T-cell (primary cell): ENCODE measurements at regions of chr2 and their contacts with region 1.

Region 1: GRCh38 chr2:62202019-62202722 is 6.3 kb downstream of the B3GNT2 start:
- DNase-seq: no peak
- ATAC-seq: no peak
- H3K4me3 ChIP-seq: no peak overlapping the region
- H3K4me3 Mint-ChIP-seq: peak overlapping the region; percentile 2 to 96 (median 10)
- H3K27ac ChIP-seq: peak overlapping the region; percentile 4
- H3K27ac Mint-ChIP-seq: peak overlapping the region; percentile 26 to 71
- H3K4me1 ChIP-seq: peaks cover 43 to 72% of the 10 kb centered on the region in 2 experiments
- H3K4me1 Mint-ChIP-seq: peaks cover 95 to 98% (median 97%) of the 10 kb centered on the region in 3 donors
- H3K27me3 ChIP-seq: no peaks in the 10 kb centered on the region
- H3K27me3 Mint-ChIP-seq: no peaks in the 10 kb centered on the region

Region 2: DNA sequence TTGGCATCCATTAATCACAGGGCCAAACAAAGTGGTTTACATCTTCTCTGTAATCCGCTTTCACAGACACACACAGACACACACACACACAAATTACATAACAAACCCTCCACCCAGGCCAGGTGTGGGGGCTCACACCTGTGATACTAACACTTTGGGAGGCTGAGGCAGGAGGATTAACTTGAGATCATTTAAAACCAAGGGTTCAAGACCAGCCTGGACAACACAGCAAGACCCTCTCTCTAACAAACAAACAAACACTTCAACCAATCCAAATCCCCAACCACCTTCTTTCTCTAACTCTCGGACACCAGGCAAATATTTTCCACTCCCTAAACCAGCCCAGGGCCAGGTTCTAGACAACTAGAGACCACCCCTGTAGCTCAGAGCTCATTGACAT is 584.6 kb before region 1 on chr2:
- CTCF ChIA-PET with region 1: no interaction called
- POLR2A ChIA-PET with region 1: no interaction called
- DNase-seq: no peak
- ATAC-seq: no peak
- H3K4me3 ChIP-seq: no peak overlapping the region
- H3K4me3 Mint-ChIP-seq: no peak overlapping the region
- H3K27ac ChIP-seq: no peak overlapping the region
- H3K27ac Mint-ChIP-seq: no peak overlapping the region
- H3K4me1 ChIP-seq: no peaks in the 10 kb centered on the region
- H3K4me1 Mint-ChIP-seq: no peaks in the 10 kb centered on the region
- H3K27me3 ChIP-seq: peaks cover 0 to 2% of the 10 kb centered on the region in 2 experiments
- H3K27me3 Mint-ChIP-seq: no peaks in the 10 kb centered on the region

Region 3: GRCh38 chr2:62109554-62109953 is 92.6 kb before region 1 on chr2:
- CTCF ChIA-PET with region 1: no interaction called
- POLR2A ChIA-PET with region 1: interaction called in 1 of 2 experiments, 12 read pairs
- DNase-seq: no peak
- ATAC-seq: no peak
- H3K4me3 ChIP-seq: no peak overlapping the region
- H3K4me3 Mint-ChIP-seq: no peak overlapping the region
- H3K27ac ChIP-seq: no peak overlapping the region
- H3K27ac Mint-ChIP-seq: no peak overlapping the region
- H3K4me1 ChIP-seq: no peaks in the 10 kb centered on the region
- H3K4me1 Mint-ChIP-seq: no peaks in the 10 kb centered on the region
- H3K27me3 ChIP-seq: no peaks in the 10 kb centered on the region
- H3K27me3 Mint-ChIP-seq: no peaks in the 10 kb centered on the region

Region 4: DNA sequence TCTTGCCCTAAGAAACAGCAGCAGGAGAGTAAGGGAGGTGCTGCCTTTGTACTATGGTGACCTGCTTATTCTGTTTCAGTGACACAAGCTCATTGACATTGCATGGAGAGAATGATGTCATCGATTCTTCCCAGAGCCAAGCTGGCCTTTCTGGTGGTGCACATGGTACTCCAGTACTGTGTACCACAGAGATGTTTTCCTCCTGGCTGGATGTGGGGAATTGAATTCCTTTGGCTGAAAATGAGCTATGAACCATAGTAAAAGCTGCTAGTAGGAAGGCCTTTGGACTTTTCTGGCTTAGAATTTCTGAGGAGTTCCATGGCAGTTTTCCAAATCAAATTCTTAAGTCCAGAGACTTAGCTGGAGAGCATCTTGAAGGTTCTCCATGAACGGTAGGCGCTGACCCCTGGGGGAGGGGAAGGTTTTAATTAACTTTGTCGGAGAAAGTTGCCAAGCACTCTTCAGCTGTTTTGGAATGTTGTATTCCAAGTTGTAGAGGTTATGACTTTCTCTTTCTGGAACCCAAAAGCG is 23.4 kb before region 1 on chr2:
- CTCF ChIA-PET with region 1: no interaction called
- POLR2A ChIA-PET with region 1: no interaction called
- DNase-seq: no peak
- ATAC-seq: no peak
- H3K4me3 ChIP-seq: no peak overlapping the region
- H3K4me3 Mint-ChIP-seq: no peak overlapping the region
- H3K27ac ChIP-seq: no peak overlapping the region
- H3K27ac Mint-ChIP-seq: no peak overlapping the region
- H3K4me1 ChIP-seq: peaks cover 2 to 5% of the 10 kb centered on the region in 2 experiments
- H3K4me1 Mint-ChIP-seq: peaks cover 4 to 19% (median 6%) of the 10 kb centered on the region in 3 donors
- H3K27me3 ChIP-seq: no peaks in the 10 kb centered on the region
- H3K27me3 Mint-ChIP-seq: no peaks in the 10 kb centered on the region

Region 5: DNA sequence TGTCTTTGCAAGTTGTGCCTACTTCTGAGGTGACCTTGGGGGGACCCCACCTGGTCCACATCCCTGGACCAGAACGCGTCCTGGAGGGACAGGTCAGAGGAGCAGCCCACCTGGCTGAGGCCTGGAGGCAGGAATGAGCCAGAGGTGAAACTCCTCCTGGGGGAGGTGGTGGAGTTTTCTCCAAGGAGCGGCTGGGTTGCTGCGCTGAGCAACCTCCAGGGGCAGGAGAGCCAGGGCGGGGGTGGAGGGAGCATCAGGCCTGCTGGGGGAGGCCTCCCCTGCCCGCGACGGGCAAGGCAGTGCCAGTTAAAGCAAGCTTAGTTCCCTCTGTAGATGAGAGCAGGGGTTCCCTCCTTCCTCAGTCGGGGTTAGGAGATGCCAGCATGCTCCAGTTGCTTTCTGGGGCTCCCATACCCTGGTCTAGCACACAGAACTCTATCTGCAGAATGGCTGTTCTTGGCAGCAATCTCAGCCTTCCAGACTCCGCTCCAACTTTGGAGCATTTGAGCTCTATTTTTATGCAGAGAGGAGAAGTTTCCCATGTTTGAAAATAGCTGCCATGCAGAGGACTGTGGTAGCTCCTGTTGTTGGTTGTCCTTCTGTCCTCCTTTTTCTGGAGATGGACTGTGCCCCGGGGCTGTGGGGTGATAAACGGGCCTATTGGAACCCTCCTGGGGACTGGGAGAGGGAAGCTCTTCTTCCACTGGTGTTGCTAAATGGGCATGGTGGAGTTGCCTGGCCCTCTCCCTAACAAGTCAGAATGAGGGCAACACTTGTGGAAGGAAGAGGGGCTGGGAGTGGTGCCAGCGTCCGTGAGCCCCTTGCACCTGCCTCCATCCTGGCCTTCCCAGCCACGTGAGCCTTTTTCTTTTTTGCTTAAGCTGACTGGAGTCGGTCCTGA is 32.8 kb after region 1 on chr2:
- CTCF ChIA-PET with region 1: no interaction called
- POLR2A ChIA-PET with region 1: no interaction called
- DNase-seq: no peak
- ATAC-seq: peak in 1 of 4 experiments; percentile 14
- H3K4me3 ChIP-seq: no peak overlapping the region
- H3K4me3 Mint-ChIP-seq: no peak overlapping the region
- H3K27ac ChIP-seq: no peak overlapping the region
- H3K27ac Mint-ChIP-seq: no peak overlapping the region
- H3K4me1 ChIP-seq: no peaks in the 10 kb centered on the region
- H3K4me1 Mint-ChIP-seq: peaks cover 0 to 7% (median 6%) of the 10 kb centered on the region in 3 donors
- H3K27me3 ChIP-seq: no peaks in the 10 kb centered on the region
- H3K27me3 Mint-ChIP-seq: no peaks in the 10 kb centered on the region